Activated CD4-positive, alpha-beta T cell treated with anti-CD3 and anti-CD28 coated beads for 36 hours (primary cell): ENCODE measurements at regions of chr5 and their contacts with region 1.

Region 1: DNA sequence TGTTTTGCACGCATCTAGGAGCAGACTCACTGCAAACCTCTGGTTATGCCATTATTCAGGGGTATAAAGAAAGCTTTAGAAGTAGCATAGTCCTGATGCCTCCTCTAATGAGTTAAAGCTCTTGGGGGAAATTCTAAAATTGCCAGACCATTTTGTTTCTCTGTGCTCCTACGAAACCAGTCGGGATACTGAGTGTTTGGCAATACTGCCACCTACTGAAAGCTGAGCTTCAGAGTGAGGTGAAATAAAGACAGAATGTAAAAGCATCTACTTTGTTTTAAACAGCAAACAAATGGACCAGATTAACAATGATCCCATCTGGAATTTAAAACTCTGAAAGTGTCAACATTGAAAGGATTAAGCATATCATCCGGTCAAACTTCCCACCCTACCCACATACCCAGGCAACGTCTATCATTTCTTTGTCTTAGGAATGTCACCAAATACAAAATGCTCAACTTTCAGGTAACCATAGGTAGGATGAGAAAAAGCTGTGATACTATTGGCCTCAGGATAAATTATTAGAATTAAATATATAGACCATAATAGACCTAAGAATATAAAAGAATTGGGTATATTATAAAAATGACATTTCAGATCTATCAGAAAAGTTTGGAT is 77.8 kb upstream of the SHISAL2B start:
- DNase-seq: peak; percentile 38
- ATAC-seq: no peak
- H3K4me3 Mint-ChIP-seq: no peak overlapping the region
- H3K27ac Mint-ChIP-seq: no peak overlapping the region
- H3K4me1 Mint-ChIP-seq: no peaks in the 10 kb centered on the region
- H3K27me3 Mint-ChIP-seq: peaks cover 19% of the 10 kb centered on the region

Region 2: GRCh38 chr5:63401436-63402046 is 1210.9 kb before region 1 on chr5:
- CTCF ChIA-PET with region 1: no interaction called
- POLR2A ChIA-PET with region 1: no interaction called
- intact Hi-C with region 1: loop called in 1 of 2 experiments (anchors 2 kb)
- DNase-seq: peak; percentile 66
- ATAC-seq: no peak
- H3K4me3 Mint-ChIP-seq: no peak overlapping the region
- H3K27ac Mint-ChIP-seq: no peak overlapping the region
- H3K4me1 Mint-ChIP-seq: no peaks in the 10 kb centered on the region
- H3K27me3 Mint-ChIP-seq: no peaks in the 10 kb centered on the region

Region 3: GRCh38 chr5:64147849-64148441 is 464.5 kb before region 1 on chr5:
- CTCF ChIA-PET with region 1: no interaction called
- POLR2A ChIA-PET with region 1: no interaction called
- intact Hi-C with region 1: loop called (anchors 5 kb)
- DNase-seq: peak; percentile 26
- ATAC-seq: no peak
- H3K4me3 Mint-ChIP-seq: no peak overlapping the region
- H3K27ac Mint-ChIP-seq: no peak overlapping the region
- H3K4me1 Mint-ChIP-seq: no peaks in the 10 kb centered on the region
- H3K27me3 Mint-ChIP-seq: no peaks in the 10 kb centered on the region

Region 4: GRCh38 chr5:64229163-64229774 is 383.2 kb before region 1 on chr5:
- CTCF ChIA-PET with region 1: interaction called, 35 read pairs
- POLR2A ChIA-PET with region 1: no interaction called
- intact Hi-C with region 1: loop called (anchors 1 to 5 kb)
- DNase-seq: no peak
- ATAC-seq: no peak
- H3K4me3 Mint-ChIP-seq: no peak overlapping the region
- H3K27ac Mint-ChIP-seq: no peak overlapping the region
- H3K4me1 Mint-ChIP-seq: no peaks in the 10 kb centered on the region
- H3K27me3 Mint-ChIP-seq: no peaks in the 10 kb centered on the region

Region 5: GRCh38 chr5:64680289-64680688 is 67.8 kb after region 1 on chr5:
- CTCF ChIA-PET with region 1: no interaction called
- POLR2A ChIA-PET with region 1: no interaction called
- intact Hi-C with region 1: no loop called
- DNase-seq: peak; percentile 10
- ATAC-seq: peak; percentile 47
- H3K4me3 Mint-ChIP-seq: no peak overlapping the region
- H3K27ac Mint-ChIP-seq: no peak overlapping the region
- H3K4me1 Mint-ChIP-seq: no peaks in the 10 kb centered on the region
- H3K27me3 Mint-ChIP-seq: peaks cover 14% of the 10 kb centered on the region